OCI-LY7 (cell line): ENCODE measurements at regions of chr18 and their contacts with region 1.

Region 1: DNA sequence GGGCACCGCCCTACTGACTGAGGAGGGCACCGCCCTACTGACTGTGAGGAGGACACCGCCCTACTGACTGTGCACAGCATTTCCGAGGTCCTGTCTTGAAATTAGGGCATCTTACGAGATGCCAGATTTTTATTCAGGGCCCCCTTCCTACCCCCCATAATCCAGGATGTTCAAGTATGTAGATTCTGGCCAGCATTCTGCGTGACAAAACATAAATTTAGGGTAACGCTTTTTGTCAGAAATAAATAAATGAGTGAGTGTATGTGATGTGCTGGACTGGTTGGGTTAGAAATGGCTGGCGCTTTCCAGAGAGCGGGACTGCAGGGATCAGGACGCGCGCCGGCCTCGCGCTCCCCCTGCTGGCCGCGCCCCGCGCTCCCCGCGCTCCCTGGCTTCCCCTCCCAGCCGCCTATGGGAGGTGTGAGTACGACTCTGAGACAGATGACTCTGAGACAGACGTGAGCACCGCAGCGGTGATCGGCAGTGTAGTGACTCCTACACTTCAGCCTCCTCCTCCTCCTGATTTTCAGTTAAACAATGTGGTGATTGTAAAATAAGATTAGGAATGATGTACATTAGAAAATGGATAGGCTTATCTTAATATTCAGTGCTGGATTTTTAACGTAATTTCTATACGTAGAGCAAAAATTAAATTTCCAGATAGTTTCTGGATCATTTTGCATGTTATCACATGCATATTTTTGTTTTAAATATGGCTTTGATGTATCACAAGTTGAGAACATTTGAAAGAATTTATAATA is 149.2 kb upstream of the NFATC1 start:
- DNase-seq: peak; percentile 75
- H3K4me3 ChIP-seq: peak overlapping the region; percentile 41
- H3K27ac ChIP-seq: no peak overlapping the region
- H3K4me1 ChIP-seq: peaks cover 44% of the 10 kb centered on the region
- CTCF ChIP-seq: peak; percentile 85

Region 2: GRCh38 chr18:78875268-78875997 is 371.1 kb before region 1 on chr18:
- CTCF ChIA-PET with region 1: no interaction called
- POLR2A ChIA-PET with region 1: no interaction called
- intact Hi-C with region 1: loop called (anchors 10 kb)
- DNase-seq: peak; percentile 21
- H3K4me3 ChIP-seq: no peak overlapping the region
- H3K27ac ChIP-seq: no peak overlapping the region
- H3K4me1 ChIP-seq: no peaks in the 10 kb centered on the region
- CTCF ChIP-seq: peak; percentile 70

Region 3: GRCh38 chr18:78984941-78985784 is 261.4 kb before region 1 on chr18:
- CTCF ChIA-PET with region 1: no interaction called
- POLR2A ChIA-PET with region 1: no interaction called
- intact Hi-C with region 1: loop called (anchors 1 kb)
- DNase-seq: peak; percentile 53
- H3K4me3 ChIP-seq: no peak overlapping the region
- H3K27ac ChIP-seq: no peak overlapping the region
- H3K4me1 ChIP-seq: no peaks in the 10 kb centered on the region
- CTCF ChIP-seq: peak; percentile 63

Region 4: GRCh38 chr18:79068937-79069791 is 177.4 kb before region 1 on chr18 and contains the start of gene ATP9B:
- CTCF ChIA-PET with region 1: no interaction called
- POLR2A ChIA-PET with region 1: no interaction called
- intact Hi-C with region 1: loop called (anchors 2 kb)
- DNase-seq: peak; percentile 90
- H3K4me3 ChIP-seq: peak within 1 kb of the TSS; percentile 94
- H3K27ac ChIP-seq: peak within 1 kb of the TSS; percentile 58
- H3K4me1 ChIP-seq: peaks cover 10% of the 10 kb centered on the region
- CTCF ChIP-seq: no peak
- total RNA-seq, gene ATP9B: 22.2 and 27.1 TPM in 2 replicates

Region 5: DNA sequence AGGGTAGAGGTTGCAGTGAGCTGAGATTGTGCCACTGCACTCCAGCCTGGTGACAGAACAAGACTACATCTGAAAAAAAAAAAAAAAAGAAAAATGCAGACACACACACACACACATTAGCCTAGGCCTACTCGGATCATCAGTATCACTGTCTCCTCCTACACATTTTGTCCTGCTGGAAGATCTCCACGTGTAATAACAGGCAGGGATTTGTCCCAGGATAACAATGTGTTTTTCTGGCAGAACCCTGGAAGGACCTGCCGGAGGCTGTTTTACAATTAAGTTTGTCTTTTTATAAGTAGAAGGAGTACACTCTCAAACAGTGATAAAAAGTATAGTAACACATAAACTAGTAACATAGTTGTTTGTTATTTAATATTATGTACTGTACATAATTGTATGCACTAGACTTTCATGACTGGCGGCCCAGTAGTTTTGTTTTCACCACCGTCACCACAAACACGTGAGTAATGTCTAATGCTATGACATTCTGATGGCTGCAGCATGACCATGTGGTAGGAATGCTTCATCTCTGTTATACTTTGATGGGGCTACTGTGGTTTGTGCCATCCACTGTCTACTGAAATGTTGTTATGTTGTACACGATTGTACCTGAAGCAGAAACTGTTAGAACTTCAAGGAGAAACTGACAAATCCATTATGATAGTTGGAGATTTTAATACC is 46.7 kb before region 1 on chr18:
- CTCF ChIA-PET with region 1: no interaction called
- POLR2A ChIA-PET with region 1: interaction called, 3 read pairs
- intact Hi-C with region 1: loop called (anchors 2 kb)
- DNase-seq: no peak
- H3K4me3 ChIP-seq: no peak overlapping the region
- H3K27ac ChIP-seq: no peak overlapping the region
- H3K4me1 ChIP-seq: peaks cover 62% of the 10 kb centered on the region
- CTCF ChIP-seq: no peak